H1 (cell line): ENCODE measurements at regions of chr17 and their contacts with region 1.

Region 1: DNA sequence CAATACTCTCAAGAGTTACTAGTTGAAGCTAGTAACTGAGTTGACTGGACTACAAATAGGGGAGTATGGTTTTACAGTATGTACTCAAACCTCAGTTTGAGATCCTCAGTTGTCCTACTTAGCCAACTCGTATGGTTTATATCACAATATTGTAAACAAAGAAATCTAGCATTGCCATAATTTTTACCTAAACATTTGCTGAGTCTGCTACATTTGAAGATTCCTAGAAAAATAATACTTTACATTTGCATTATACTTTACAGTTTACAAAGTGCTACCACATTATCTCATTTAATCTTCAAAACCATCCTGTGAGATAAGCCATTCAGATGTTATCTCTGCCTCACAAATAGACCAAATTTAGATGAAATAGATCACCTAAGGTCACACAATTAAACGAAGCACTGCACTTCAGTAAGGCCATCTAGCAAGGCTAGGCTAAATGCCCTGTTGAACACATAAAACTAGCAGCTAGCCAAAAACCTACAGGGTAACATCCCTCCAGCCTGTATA is 16.3 kb downstream of the CBX1 start:
- DNase-seq: no peak
- H3K4me3 ChIP-seq: no peak overlapping the region
- H3K27ac ChIP-seq: no peak overlapping the region
- H3K4me1 ChIP-seq: no peaks in the 10 kb centered on the region
- H3K27me3 ChIP-seq: no peaks in the 10 kb centered on the region
- CTCF ChIP-seq: no peak
- EP300 ChIP-seq: no peak
- POLR2A ChIP-seq: no peak
- RAD21 ChIP-seq: no peak

Region 2: GRCh38 chr17:47981462-47981861 is 103.5 kb before region 1 on chr17:
- CTCF ChIA-PET with region 1: no interaction called
- POLR2A ChIA-PET with region 1: no interaction called
- DNase-seq: no peak
- H3K4me3 ChIP-seq: no peak overlapping the region
- H3K27ac ChIP-seq: no peak overlapping the region
- H3K4me1 ChIP-seq: peaks cover 0 to under 1% (median 0%) of the 10 kb centered on the region in 4 experiments; a peak in 2 of 7 replicates
- H3K27me3 ChIP-seq: no peaks in the 10 kb centered on the region
- CTCF ChIP-seq: no peak
- EP300 ChIP-seq: no peak
- POLR2A ChIP-seq: no peak
- RAD21 ChIP-seq: no peak

Region 3: GRCh38 chr17:48068491-48068961 is 16.5 kb before region 1 on chr17:
- CTCF ChIA-PET with region 1: interaction called, 203 read pairs
- POLR2A ChIA-PET with region 1: interaction called, 249 read pairs
- DNase-seq: peak in 1 of 2 experiments; percentile 62
- H3K4me3 ChIP-seq: no peak overlapping the region
- H3K27ac ChIP-seq: no peak overlapping the region
- H3K4me1 ChIP-seq: peaks cover 0 to 2% (median 0%) of the 10 kb centered on the region in 4 experiments; a peak in 1 of 7 replicates
- H3K27me3 ChIP-seq: no peaks in the 10 kb centered on the region
- CTCF ChIP-seq: peak; percentile 60 to 74 (median 69)
- EP300 ChIP-seq: no peak
- POLR2A ChIP-seq: no peak
- RAD21 ChIP-seq: peak; percentile 39 to 51

Region 4: DNA sequence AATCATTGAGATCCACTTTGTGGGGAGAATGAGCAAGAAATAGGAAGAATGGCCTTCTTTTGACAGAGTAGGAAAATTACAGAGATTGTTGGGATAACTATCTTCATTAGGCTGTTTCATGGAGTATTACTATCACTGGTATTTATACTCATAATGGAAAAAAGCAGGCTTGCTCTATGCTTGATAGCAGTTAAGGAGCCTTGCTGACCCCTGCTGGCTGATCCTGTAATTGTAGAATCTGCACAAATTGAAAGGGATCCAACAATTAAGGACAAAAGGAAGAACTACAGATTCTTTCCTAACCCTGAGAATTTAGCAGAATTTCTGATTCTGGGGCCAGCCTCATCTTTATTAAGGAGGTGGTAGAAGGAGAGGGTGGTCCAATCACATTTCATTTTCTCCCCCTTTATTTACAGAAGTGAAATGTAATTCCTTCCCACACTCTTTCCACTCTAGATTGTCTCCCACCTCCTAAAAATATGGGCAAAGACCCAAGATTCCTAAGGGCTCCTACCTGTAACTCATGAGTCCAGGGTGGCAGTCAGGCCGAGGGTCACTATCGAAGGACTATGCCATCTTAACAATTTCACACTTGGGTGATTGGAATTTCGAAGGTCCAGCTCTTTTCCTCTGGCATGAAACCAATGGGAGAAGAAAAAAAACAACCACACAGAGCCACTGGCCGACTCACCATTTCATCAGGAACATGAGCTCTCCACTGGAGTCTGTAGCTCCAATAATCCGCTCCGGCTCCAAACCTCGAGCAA is 10.5 kb before region 1 on chr17:
- CTCF ChIA-PET with region 1: interaction called, 75 read pairs
- POLR2A ChIA-PET with region 1: interaction called, 249 read pairs
- DNase-seq: peak in 1 of 2 experiments; percentile 83
- H3K4me3 ChIP-seq: no peak overlapping the region
- H3K27ac ChIP-seq: no peak overlapping the region
- H3K4me1 ChIP-seq: no peaks in the 10 kb centered on the region
- H3K27me3 ChIP-seq: no peaks in the 10 kb centered on the region
- CTCF ChIP-seq: peak in 2 of 3 experiments; percentile 75 to 77; a peak in 3 of 4 replicates
- EP300 ChIP-seq: no peak
- POLR2A ChIP-seq: no peak
- RAD21 ChIP-seq: peak; percentile 67 to 75

Region 5: DNA sequence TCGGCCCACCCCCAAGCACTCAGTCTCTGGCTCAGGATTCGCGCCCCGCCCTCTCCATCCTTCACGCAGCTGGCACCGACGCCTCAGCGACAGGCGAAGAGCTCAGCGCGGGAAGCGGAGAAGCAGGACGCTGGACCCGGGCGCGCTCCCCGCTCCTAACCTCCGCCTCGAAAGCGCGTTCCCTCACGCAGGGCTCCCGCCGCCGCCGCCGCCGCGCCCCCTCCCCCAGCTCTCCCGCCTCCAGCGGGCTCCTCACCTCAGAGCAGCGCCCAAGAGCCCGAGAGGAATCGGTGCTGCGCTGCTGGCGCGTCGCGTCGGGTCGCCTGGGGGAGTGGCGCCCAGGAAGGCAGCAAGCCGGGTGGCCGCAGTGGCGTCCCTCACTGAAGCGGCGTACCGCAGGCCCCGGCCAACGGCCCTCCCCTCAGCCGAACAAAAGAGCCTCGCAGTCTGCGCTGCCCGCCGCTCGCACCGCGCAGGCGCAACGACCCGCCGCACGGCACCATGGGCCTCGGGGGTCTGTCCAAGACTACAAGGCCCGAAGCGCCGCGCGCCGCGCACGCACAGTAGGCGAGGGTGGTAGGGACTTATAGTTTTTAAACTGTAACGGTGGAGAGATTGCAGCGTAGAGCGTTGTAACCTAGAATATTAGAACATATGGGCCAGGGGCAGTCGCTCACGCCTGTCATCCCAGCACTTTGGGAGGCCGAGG is 16.2 kb after region 1 on chr17 and contains the start of gene CBX1:
- CTCF ChIA-PET with region 1: interaction called, 58 read pairs
- POLR2A ChIA-PET with region 1: interaction called, 9 read pairs
- DNase-seq: peak; percentile 92 to 95
- H3K4me3 ChIP-seq: peak within 1 kb of the TSS; percentile 74 to 94 (median 87)
- H3K27ac ChIP-seq: peak within 1 kb of the TSS; percentile 72; the same call in 1 of the 2 replicates
- H3K4me1 ChIP-seq: peaks cover 0 to 3% (median 0%) of the 10 kb centered on the region in 4 experiments; a peak in 1 of 7 replicates
- H3K27me3 ChIP-seq: no peaks in the 10 kb centered on the region
- CTCF ChIP-seq: 0 out of 4 replicates have a peak, but pooled peaks of 1 of the 3 experiments have one; percentile 3
- EP300 ChIP-seq: 0 out of 3 replicates have a peak, but pooled peaks of 1 of the 2 experiments have one; percentile 19
- POLR2A ChIP-seq: peak in 1 of 2 experiments; percentile 43; a peak in 2 of 3 replicates
- RAD21 ChIP-seq: no peak
- total RNA-seq, gene CBX1: 166 and 173 TPM in 2 replicates

Region 6: GRCh38 chr17:48107168-48108132 is 22.5 kb after region 1 on chr17 and contains the start of gene SNX11:
- CTCF ChIA-PET with region 1: interaction called, 33 read pairs
- POLR2A ChIA-PET with region 1: interaction called, 6 read pairs
- DNase-seq: peak; percentile 61 to 96
- H3K4me3 ChIP-seq: peak within 1 kb of the TSS; percentile 82 to 95 (median 88)
- H3K27ac ChIP-seq: peak within 1 kb of the TSS; percentile 69
- H3K4me1 ChIP-seq: no peaks in the 10 kb centered on the region; a peak in 1 of 7 replicates
- H3K27me3 ChIP-seq: no peaks in the 10 kb centered on the region
- CTCF ChIP-seq: no peak
- EP300 ChIP-seq: no peak
- POLR2A ChIP-seq: peak in 1 of 2 experiments; percentile 41; a peak in 1 of 3 replicates
- RAD21 ChIP-seq: no peak
- total RNA-seq, gene SNX11: 20.9 and 21.1 TPM in 2 replicates

Region 7: GRCh38 chr17:48113201-48113676 is 28.3 kb after region 1 on chr17:
- CTCF ChIA-PET with region 1: interaction called, 33 read pairs
- POLR2A ChIA-PET with region 1: interaction called, 6 read pairs
- DNase-seq: no peak
- H3K4me3 ChIP-seq: no peak overlapping the region
- H3K27ac ChIP-seq: no peak overlapping the region
- H3K4me1 ChIP-seq: no peaks in the 10 kb centered on the region
- H3K27me3 ChIP-seq: no peaks in the 10 kb centered on the region
- CTCF ChIP-seq: no peak
- EP300 ChIP-seq: no peak
- POLR2A ChIP-seq: no peak
- RAD21 ChIP-seq: no peak

Region 8: DNA sequence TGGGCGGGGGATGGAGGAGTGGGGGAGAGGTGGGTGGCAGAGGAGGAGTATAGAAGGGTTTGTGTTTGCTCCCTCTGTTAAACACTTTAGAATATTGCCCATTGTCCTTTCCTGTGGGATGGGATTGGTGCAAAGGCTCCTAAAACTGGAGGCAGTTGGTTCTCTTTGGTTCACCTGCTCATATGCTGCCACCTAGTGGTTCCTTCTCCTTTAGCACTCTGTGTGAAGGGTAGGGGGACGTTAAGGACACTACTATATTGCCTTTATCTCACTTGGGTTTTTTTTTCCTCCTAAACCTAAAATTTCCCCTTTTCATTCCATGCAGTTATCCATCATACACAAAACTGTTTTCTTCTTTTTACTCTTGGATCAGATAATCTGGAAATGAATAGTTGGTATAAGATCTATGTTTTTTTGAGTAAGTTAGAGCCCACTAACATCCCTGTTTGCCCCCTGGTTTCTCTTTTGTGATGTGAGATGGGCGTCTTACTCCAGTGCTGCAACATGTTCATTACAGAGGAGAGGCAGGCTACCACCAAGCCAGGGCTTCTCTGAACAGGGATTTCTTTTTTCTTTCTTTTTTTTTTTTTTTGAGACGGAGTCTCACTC is 46.3 kb after region 1 on chr17:
- CTCF ChIA-PET with region 1: interaction called, 53 read pairs
- POLR2A ChIA-PET with region 1: interaction called, 3 read pairs
- DNase-seq: peak; percentile 15 to 68
- H3K4me3 ChIP-seq: no peak overlapping the region
- H3K27ac ChIP-seq: no peak overlapping the region
- H3K4me1 ChIP-seq: no peaks in the 10 kb centered on the region
- H3K27me3 ChIP-seq: no peaks in the 10 kb centered on the region
- CTCF ChIP-seq: peak; percentile 6 to 87 (median 87)
- EP300 ChIP-seq: no peak
- POLR2A ChIP-seq: no peak
- RAD21 ChIP-seq: peak; percentile 89 to 91